ENCODE measurements at regions of chr1 and their contacts with region 1.

Region 1: DNA sequence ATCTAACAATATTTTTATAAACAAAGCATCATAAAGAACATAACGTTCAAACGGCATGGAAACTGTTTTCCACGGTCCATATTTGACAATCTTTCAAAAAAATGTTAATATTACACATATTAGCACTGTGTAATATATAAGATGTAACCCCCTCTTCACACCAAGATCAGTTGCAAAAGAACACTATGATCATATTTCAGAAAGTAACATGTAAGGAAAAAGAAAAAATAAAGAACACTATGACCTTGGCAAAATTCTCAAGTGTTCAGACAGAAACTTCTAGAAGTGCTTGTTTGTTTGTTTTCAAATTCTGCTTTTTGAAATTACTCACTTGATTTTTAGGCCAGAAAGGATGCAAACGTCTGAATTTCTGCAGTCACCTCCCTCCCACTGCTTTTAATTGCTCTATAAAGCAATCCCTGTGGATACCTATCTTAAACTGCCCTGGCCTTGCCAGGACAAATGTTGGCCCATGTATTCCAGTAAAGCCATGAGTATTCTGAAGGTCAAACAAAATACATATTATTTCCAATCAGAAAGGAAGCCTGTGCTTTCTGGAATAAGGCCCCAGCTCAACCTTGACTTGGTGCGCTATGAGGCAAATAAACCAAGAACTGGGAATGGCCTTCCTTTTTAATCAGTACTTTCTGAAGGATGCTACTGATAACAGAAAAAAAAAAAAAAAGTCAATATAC is 68.6 kb downstream of the TGFBR3 start:
- DNase-seq: no peak
- H3K4me3 ChIP-seq: no peak overlapping the region
- H3K27ac ChIP-seq: no peak overlapping the region
- H3K4me1 ChIP-seq: peaks cover 15% of the 10 kb centered on the region
- H3K27me3 ChIP-seq: no peaks in the 10 kb centered on the region
- CTCF ChIP-seq: no peak

Region 2: GRCh38 chr1:91308544-91308943 is 508.8 kb before region 1 on chr1:
- CTCF ChIA-PET with region 1: no interaction called
- POLR2A ChIA-PET with region 1: interaction called, 17 read pairs
- intact Hi-C with region 1: no loop called
- DNase-seq: no peak
- H3K4me3 ChIP-seq: no peak overlapping the region
- H3K27ac ChIP-seq: no peak overlapping the region
- H3K4me1 ChIP-seq: no peaks in the 10 kb centered on the region
- H3K27me3 ChIP-seq: no peaks in the 10 kb centered on the region
- CTCF ChIP-seq: no peak

Measured in PC-9 (cell line).